Activated naive CD4-positive, alpha-beta T cell treated with anti-CD3 and anti-CD28 coated beads, Interleukin-2, amount 10 ng/mL, durations not matched to agents 7 days and 5 days (primary cell): ENCODE measurements at regions of chr3 and their contacts with region 1.

Region 1: GRCh38 chr3:14261229-14261628 is 82.6 kb downstream of the LSM3 start:
- DNase-seq: peak; percentile 82
- H3K4me3 Mint-ChIP-seq: no peak overlapping the region
- H3K27ac Mint-ChIP-seq: no peak overlapping the region
- H3K4me1 Mint-ChIP-seq: no peaks in the 10 kb centered on the region
- H3K27me3 Mint-ChIP-seq: peaks cover 39% of the 10 kb centered on the region

Region 2: GRCh38 chr3:13895155-13896105 is 365.8 kb before region 1 on chr3:
- CTCF ChIA-PET with region 1: interaction called, 10 read pairs
- DNase-seq: peak; percentile 98
- H3K4me3 Mint-ChIP-seq: peak overlapping the region; percentile 84
- H3K27ac Mint-ChIP-seq: peak overlapping the region; percentile 88
- H3K4me1 Mint-ChIP-seq: peaks cover 36% of the 10 kb centered on the region
- H3K27me3 Mint-ChIP-seq: peaks cover 33% of the 10 kb centered on the region

Region 3: GRCh38 chr3:14461748-14462324 is 200.6 kb after region 1 on chr3:
- CTCF ChIA-PET with region 1: interaction called, 28 read pairs
- DNase-seq: peak; percentile 62
- H3K4me3 Mint-ChIP-seq: no peak overlapping the region
- H3K27ac Mint-ChIP-seq: peak overlapping the region; percentile 74
- H3K4me1 Mint-ChIP-seq: peaks cover 4% of the 10 kb centered on the region
- H3K27me3 Mint-ChIP-seq: no peaks in the 10 kb centered on the region

Region 4: DNA sequence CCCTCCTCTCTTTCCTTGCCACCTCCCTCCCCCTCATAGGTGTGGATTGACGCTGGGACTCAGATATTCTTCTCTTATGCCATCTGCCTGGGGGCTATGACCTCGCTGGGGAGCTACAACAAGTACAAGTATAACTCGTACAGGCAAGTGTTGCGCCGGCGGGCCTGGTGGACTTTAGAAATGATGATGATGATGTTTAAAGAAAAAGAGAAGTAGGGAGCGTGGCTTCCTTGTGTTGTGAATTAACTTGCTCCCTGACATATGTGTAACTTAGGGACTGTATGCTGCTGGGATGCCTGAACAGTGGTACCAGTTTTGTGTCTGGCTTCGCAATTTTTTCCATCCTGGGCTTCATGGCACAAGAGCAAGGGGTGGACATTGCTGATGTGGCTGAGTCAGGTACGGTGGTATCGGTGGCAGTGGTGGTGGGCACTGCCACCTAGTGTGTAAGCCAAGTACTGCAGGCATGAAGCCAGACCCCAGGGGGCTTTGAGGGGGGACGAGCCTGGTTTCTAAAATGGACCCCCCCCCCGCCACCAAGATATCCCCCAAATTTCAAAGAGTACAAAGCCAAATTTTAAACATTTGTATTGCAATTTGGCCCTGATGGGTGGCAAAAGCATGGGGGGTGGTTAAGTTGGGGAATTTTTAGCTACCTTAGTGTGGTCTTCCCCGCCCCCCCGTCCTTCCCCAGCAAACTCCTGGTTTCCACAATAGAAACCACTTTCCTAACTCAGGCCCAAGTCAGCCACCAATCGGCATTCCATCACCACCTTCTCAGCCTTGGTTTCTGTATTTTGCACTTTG is 206.8 kb after region 1 on chr3:
- CTCF ChIA-PET with region 1: interaction called, 28 read pairs
- DNase-seq: peak; percentile 53
- H3K4me3 Mint-ChIP-seq: no peak overlapping the region
- H3K27ac Mint-ChIP-seq: no peak overlapping the region
- H3K4me1 Mint-ChIP-seq: peaks cover 2% of the 10 kb centered on the region
- H3K27me3 Mint-ChIP-seq: no peaks in the 10 kb centered on the region